GM13976 (cell line): ENCODE measurements at regions of chr16 and their contacts with region 1.

Region 1: GRCh38 chr16:18969050-18969854 is 14.5 kb upstream of the TMC7 start:
- DNase-seq: peak; percentile 86
- CTCF ChIP-seq: peak; percentile 93

Region 2: DNA sequence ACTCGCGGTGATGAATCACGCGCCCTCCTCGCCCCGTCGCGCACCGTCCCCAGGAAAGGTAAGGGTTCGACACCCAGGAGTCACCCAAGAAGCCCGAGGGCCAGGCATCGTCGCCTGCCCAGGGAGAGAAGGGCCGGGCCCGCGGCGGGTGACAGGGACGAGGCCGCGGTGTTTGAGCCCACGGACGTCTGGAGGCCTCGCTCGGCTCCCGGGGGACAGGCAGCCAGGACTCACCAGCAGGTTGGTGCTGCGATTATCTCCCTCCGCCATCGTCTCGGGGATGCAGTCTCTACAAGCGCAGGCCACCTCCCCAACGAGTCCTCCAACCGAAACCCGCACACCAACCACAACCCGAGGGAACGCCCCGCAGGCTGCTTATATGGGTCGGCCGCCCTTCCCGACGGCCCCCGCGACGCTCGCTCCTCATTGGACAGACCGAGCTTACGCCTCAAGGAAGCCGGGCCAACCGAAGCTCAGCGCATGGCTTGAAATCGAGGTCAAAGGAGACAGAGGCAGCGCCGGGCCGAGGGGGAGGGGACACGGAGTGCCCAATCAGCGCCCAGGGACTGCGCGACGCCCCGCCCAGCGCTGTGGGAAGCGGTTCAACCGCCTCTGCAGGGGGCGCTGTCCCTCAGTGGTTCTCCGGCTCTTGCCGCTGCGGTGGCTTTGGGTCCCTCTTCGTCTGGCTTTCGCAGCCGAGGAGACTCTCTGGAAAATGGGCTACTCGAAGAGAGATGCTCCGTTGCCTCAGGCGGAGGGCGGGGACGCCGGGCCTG is 167.9 kb before region 1 on chr16 and contains the start of gene ARL6IP1:
- in situ Hi-C with region 1: loop called (anchors 10 kb)
- DNase-seq: peak; percentile 99
- CTCF ChIP-seq: peak; percentile 88

Region 3: DNA sequence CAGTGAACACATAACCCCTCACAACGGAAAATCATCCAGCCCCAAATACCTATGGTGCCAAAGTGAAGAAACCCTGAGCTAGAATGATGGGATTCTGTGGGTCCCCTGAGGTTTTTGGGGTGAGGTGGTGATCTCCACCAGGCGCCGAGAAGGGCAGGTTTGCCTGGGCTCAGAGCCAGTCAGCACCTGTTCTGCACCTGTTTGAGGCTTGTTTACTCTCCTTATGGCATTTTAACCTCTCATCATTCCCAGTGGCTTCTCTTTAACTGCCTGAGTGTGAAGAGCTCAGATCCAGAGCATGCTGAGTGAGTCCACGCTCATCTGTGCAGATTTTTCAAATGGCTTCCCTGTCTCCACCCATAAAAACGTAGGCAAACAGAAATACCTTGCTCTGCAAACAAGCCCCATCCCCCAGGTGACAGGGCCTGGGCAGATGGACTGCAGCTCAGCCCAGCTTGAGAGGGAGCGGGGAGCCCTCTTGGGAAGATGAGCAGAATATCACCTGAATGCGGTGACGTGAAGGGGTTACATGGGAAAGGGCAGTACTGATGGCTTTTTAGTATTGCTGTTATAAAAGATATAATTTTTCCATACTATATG is 276.2 kb after region 1 on chr16:
- in situ Hi-C with region 1: no loop called
- DNase-seq: no peak
- CTCF ChIP-seq: no peak